Left ventricle myocardium superior (tissue), 1 donor: ENCODE measurements at regions of chr11 and their contacts with region 1.

Region 1: DNA sequence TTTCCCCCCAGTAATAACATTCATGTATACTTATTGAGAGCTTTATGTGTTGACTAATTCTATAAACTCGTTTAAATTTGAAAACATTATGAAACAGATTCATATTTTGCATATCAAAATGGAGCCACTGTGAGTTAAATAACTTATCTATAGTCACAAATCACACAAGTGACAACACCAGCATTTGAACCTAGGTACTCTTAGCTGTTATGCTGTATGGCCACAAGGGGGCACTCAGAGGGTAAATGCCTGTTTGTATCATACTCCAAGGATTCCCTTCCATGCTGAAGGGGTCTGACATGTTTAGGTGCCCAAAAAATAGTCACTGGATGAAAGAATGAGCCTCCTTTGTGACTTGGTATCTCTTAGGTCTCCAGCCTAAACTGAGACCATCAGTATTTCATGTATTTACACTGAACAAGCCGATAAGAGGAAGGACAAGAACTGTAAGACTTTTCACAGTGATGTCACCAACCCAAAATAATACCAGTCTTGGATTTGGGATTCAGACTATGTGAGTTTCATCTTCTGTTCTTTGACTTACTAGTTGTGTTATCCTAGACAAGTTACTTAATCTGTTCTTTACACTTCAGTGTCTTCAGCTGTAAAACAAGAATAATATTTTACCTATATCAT is 12.2 kb upstream of the OR52D1 start:
- DNase-seq: no peak
- ATAC-seq: peak; percentile 38

Region 2: GRCh38 chr11:5336331-5336730 is 140.0 kb before region 1 on chr11:
- intact Hi-C with region 1: no loop called
- DNase-seq: no peak
- ATAC-seq: no peak

Region 3: DNA sequence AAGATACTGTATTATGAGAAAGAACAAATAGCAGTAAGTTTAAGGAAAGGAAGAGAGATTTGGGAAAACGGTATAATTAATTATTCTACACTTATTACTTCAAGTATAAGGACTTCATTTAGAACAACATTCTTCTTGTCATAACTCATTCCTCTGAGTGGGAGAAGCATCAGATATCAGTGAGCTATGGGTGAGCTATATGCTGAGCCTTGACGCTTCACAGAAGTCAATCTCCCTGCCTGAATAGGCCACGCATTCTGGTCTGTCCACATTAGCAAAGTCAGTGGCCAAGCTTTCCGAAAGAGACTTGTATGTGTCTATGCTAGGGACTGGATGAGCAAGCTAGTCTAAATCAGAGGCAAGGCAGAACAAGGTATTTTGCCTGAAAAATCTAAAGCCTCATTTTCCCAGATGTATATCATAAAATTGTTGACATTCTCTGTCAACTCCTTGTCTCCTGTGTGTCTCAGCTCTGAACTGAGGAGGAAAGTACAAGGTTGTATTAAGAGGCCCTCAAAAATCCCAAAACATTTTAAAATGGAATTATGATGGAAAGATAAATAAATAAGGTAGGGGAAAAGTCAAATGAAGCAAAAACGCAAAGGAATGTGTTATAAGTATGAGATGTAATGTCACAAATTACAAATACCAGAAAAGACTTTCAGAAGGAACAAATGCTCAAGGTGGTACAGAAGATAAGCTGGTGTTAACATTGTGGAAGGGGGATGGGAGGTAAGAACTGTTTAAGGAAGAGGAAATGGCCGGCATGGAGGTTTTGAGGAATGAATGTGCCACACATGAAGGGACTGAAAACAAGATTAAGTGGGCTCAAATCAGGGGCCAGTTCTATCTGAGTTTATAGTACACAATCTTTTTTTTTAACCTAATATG is 333.8 kb after region 1 on chr11:
- intact Hi-C with region 1: loop called (anchors 2 kb)
- DNase-seq: no peak
- ATAC-seq: no peak